Activated CD4-positive, alpha-beta memory T cell treated with anti-CD3 and anti-CD28 coated beads for 36 hours (primary cell): ENCODE measurements at regions of chr12 and their contacts with region 1.

Region 1: DNA sequence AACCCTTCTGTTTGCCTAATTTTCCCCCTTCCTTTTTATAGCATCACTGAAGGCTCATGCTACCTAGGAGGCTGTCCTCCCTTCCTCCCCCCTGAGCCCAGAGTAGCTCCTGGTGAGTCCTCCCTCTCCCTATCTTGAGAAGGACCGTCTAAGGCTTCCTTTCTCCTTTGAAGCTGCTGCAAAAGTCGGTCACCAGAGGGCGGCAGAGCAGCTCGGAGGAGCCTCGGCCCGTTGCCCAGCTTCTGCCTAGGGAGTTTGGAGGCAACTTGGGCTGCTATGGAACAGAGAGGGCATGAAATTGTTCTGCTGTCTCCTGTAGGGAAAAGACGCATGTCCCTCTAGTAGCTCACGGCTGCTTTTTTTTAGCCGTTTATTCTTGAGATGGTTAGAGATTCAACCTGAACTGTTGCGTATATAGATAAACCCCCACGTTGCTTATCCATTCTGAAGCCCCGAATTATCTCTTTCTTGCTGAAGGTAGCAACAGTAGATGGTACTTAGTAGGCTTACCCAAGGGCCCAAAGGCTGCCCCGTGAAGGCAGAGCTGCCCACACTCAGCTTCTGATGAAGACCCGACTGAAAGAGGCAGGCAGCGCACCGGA is 5.7 kb downstream of the WNT5B start:
- DNase-seq: peak; percentile 75
- H3K4me3 Mint-ChIP-seq: no peak overlapping the region
- H3K27ac Mint-ChIP-seq: no peak overlapping the region
- H3K4me1 Mint-ChIP-seq: peaks cover 9% of the 10 kb centered on the region
- H3K27me3 Mint-ChIP-seq: peaks cover 48% of the 10 kb centered on the region

Region 2: DNA sequence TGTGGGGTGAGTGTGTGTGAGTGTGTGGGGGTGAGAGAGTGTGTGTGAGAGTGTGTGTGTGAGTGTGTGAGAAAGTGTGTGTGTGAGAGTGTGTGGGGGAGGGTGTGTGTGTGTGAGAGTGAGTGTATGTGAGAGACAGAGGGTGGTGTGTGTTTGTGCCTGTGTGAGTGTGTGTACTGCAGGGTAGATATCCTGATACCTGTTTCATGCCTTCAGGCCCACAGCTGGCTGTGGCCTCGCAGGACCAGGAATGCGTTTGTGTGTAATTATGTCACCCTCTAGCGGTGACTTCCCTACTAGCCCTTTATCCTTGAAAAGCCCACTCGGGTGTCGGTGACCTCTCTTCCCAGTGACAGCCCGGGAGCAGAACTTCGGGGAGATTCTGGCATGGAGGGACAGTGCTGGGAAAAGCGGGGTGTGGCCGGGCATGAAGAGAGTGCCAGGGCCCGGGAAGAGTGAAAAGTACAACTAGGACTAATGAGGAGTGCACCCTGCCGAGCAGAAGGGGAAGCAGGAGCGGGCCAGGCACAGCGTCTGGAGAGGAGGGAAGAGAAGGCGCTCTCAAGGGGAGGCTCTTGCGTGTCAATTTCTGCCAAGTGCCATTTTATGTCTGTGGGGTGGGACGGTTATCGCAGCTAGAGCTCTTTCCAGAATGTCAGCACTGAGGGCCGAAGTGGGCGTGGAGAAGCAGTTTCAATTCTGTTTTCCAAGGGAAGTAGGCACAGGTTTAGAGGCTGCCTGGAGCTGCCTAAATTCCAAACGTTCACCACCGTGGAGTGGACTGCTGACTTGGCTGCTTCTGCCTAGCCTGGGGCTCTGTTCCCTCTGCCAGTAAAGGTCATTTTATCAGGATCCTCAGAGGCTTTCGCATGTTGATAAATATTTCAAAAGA is 29.3 kb before region 1 on chr12:
- CTCF ChIA-PET with region 1: interaction called, 14 read pairs
- POLR2A ChIA-PET with region 1: no interaction called
- intact Hi-C with region 1: no loop called
- DNase-seq: peak; percentile 67
- H3K4me3 Mint-ChIP-seq: peak overlapping the region; percentile 74
- H3K27ac Mint-ChIP-seq: peak overlapping the region; percentile 25
- H3K4me1 Mint-ChIP-seq: peaks cover 30% of the 10 kb centered on the region
- H3K27me3 Mint-ChIP-seq: no peaks in the 10 kb centered on the region

Region 3: DNA sequence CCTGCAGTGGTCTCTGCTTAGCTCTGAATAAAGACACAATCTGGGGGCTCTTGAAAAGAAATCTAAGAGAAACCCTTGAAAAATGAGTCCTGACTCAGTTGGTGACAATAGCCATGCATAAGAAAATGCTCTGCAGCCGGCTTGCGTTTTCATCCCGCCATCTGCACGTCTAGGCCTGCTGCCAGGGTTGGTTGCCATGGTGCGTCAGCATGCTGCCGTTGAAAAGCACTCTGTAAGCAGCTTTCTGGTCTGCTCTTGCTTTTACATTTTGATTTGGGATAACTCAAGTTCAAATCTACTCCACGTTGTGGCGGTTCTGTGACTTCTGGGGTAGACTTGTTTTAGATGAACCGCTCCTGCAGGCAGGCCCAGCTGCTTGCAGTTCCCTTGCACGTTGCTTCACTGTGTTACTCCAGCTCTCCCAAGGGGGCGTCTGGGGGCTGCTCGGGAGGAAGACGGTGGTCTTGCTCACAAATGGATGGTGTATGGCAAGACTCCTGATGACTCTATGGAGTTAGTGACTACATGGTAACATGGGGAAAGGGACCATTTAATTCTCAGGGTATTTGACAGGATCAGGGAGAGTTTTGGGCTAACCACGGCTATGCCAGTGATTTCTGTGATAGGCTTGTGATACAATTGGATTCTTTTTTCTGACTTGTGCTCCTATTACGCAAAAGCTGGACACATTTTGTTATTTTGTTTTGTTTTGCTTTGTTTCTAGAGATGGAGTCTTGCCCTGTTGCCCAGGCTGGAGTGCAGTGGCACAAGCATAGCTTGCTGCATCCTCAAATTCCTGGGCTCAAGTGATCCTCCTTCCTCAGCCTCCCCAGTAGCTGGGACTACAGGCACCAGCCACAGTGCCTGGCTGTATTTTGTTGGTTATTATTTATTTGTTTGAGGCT is 10.1 kb after region 1 on chr12:
- CTCF ChIA-PET with region 1: interaction called, 22 read pairs
- POLR2A ChIA-PET with region 1: interaction called, 3 read pairs
- intact Hi-C with region 1: no loop called
- DNase-seq: no peak
- H3K4me3 Mint-ChIP-seq: no peak overlapping the region
- H3K27ac Mint-ChIP-seq: no peak overlapping the region
- H3K4me1 Mint-ChIP-seq: no peaks in the 10 kb centered on the region
- H3K27me3 Mint-ChIP-seq: peaks cover 6% of the 10 kb centered on the region

Region 4: GRCh38 chr12:1650260-1650977 is 15.7 kb after region 1 on chr12:
- CTCF ChIA-PET with region 1: interaction called, 22 read pairs
- POLR2A ChIA-PET with region 1: interaction called, 3 read pairs
- intact Hi-C with region 1: no loop called
- DNase-seq: no peak
- H3K4me3 Mint-ChIP-seq: no peak overlapping the region
- H3K27ac Mint-ChIP-seq: no peak overlapping the region
- H3K4me1 Mint-ChIP-seq: no peaks in the 10 kb centered on the region
- H3K27me3 Mint-ChIP-seq: peaks cover 10% of the 10 kb centered on the region

Region 5: GRCh38 chr12:1873531-1874510 is 239.1 kb after region 1 on chr12:
- CTCF ChIA-PET with region 1: no interaction called
- POLR2A ChIA-PET with region 1: no interaction called
- intact Hi-C with region 1: no loop called
- DNase-seq: no peak
- H3K4me3 Mint-ChIP-seq: no peak overlapping the region
- H3K27ac Mint-ChIP-seq: no peak overlapping the region
- H3K4me1 Mint-ChIP-seq: no peaks in the 10 kb centered on the region
- H3K27me3 Mint-ChIP-seq: peaks cover 8% of the 10 kb centered on the region